Stomach (tissue), 19 donors: ENCODE measurements at regions of chr6 and their contacts with region 1.

Region 1: GRCh38 chr6:83071023-83071422 is 3.6 kb downstream of the DOP1A start:
- DNase-seq: peak in 1 of 2 donors; percentile 36
- H3K4me3 ChIP-seq: no peak overlapping the region
- H3K27ac ChIP-seq: peak overlapping the region in 3 of 5 donors; percentile 52 to 68 (median 62)
- H3K4me1 ChIP-seq: peaks cover 11 to 51% (median 28%) of the 10 kb centered on the region in 4 donors
- H3K27me3 ChIP-seq: no peaks in the 10 kb centered on the region
- CTCF ChIP-seq: no peak
- EP300 ChIP-seq: no peak
- POLR2A ChIP-seq: no peak

Region 2: GRCh38 chr6:82995066-82995465 is 76.0 kb before region 1 on chr6:
- intact Hi-C with region 1: no loop called
- DNase-seq: no peak
- H3K4me3 ChIP-seq: no peak overlapping the region
- H3K27ac ChIP-seq: no peak overlapping the region
- H3K4me1 ChIP-seq: no peaks in the 10 kb centered on the region
- H3K27me3 ChIP-seq: no peaks in the 10 kb centered on the region
- CTCF ChIP-seq: no peak
- EP300 ChIP-seq: no peak
- POLR2A ChIP-seq: no peak

Region 3: DNA sequence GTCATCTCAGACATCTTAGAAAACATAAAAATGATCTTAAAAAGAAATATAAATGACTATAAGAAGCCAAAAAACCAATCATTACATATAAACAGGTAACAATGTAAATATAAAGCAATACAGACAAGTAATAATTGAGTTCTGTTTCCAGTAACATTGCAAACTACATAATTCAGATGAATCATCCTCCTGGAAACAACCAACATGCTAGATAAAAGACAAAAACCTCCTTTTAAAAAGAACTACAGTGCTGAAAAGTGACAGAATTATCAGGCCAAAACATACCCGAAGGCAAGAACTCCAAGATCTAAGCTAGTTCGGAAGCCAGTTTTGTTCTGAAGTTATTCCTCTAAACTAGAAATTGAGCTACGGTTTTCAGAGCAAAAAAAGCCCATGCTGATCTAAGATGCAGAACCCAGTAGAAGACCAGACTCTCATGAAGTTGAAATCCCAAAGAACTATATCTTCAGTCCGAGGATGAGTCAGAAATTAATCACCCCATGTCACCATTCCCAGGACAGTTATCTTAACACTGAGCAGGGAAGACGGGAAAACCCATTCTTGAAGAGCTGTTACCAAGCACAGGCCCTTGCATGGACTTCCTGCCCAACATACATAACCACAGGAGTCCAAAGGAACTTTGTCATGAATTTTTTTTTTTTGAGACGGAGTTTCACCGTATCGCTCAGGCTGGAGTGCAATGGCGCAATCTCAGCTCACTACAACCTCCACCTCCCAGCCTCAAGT is 112.2 kb after region 1 on chr6:
- intact Hi-C with region 1: loop called (anchors 10 kb)
- DNase-seq: no peak
- H3K4me3 ChIP-seq: no peak overlapping the region
- H3K27ac ChIP-seq: no peak overlapping the region
- H3K4me1 ChIP-seq: peaks cover 0 to under 1% (median 0%) of the 10 kb centered on the region in 4 donors
- H3K27me3 ChIP-seq: no peaks in the 10 kb centered on the region
- CTCF ChIP-seq: no peak
- EP300 ChIP-seq: no peak
- POLR2A ChIP-seq: no peak